Heart right ventricle (tissue), 16 donors: ENCODE measurements at regions of chr7 and their contacts with region 1.

Region 1: GRCh38 chr7:7566651-7567611 is at the start of gene MIOS:
- DNase-seq: peak; percentile 87 to 92
- ATAC-seq: peak; percentile 95 to 98 (median 97)
- H3K4me3 ChIP-seq: peak within 1 kb of the TSS; percentile 63 to 97 (median 82)
- H3K27ac ChIP-seq: peak within 1 kb of the TSS; percentile 48 to 97 (median 94)
- H3K4me1 ChIP-seq: peaks cover 8 to 52% (median 19%) of the 10 kb centered on the region in 9 donors
- H3K27me3 ChIP-seq: no peaks in the 10 kb centered on the region
- CTCF ChIP-seq: peak in 1 of 9 donors; percentile 15
- total RNA-seq, gene MIOS: 15.7 to 28.8 (median 20.8) TPM

Region 2: DNA sequence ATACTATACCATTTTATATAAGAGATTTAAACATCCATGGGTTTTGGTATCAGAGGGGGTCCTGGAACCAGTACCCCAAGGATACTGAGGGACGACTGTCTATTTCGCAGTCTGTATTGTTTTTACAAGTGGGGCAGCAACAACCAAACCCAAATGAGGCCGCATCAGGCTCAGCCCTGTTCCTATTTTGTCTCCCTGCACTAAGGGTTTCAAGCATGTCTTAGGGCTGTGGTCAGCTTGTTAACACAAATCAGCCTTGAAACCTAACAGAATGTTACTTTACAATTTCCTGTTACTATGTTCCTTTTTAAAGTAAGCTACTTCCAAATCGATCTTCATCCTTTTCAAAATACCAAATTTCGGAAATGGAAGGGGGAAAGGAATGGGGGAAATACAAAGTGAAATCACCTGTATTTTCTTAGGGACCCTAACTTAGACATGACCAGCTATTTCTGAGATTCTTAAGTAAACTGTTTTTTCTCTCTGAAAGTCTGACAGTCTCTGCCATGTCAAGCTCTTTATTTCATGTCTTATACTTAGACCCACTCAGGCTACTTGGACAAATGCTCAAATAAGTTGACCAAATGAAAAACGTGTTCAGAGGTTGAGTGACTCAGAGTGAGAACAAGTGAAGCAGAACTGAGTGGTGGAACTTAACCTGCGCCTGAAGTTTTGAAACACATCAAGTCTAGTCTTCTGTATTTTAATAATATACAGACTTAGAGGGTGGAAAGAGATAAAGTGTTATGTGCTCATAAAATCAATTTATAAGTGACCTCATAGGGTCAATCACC is 308.8 kb before region 1 on chr7:
- intact Hi-C with region 1: loop called in 1 of 10 experiments (anchors 10 kb)
- DNase-seq: no peak
- ATAC-seq: peak in 1 of 8 donors; percentile 50
- H3K4me3 ChIP-seq: peak overlapping the region in 1 of 10 donors; percentile 36
- H3K27ac ChIP-seq: peak overlapping the region in 2 of 10 donors; percentile 18 to 84
- H3K4me1 ChIP-seq: peaks cover 0 to 37% (median 8%) of the 10 kb centered on the region in 9 donors
- H3K27me3 ChIP-seq: no peaks in the 10 kb centered on the region
- CTCF ChIP-seq: no peak

Region 3: DNA sequence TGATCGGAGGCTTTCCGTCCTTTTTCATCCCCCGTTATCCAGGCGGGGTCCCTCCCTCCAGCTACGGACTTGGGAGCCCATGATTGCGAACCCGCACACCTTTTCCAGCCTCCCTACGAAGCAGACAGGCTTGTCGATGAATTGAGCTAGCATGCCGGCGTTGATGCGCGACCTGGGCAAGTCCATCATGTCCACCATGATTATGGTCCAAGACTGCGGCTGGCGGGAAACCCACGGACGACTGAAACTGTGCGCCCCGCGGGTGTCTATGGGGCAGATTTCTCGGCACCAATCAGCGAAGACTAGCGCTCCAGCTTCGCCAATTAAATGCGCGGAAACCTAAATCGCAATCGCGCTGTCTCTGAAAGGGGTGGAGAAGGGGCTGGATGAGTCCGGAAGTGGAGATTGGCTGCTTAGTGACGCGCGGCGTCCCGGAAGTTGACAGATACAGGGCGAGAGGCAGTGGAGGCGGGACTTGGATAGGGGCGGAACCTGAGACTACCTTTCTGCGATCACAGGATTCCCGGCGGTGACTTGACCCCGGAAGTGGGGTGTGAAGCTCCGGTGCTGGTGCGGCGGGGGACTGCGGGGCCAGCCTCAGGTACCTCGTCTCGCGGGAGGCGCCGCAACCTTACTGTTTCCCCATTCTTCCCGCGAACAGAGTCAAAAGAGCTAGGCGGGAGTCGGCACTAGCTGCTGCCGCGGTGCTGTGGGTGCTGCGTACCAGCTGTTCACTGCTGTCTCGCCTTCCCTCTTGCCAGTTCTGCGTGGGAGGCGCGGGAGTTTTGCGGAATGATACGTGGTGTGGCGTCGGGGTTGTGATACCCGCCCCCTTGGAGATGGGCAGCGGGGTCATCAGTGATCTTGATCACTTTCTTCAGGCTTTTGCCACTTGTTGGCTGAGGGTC is 73.5 kb after region 1 on chr7 and contains the start of gene UMAD1:
- intact Hi-C with region 1: loop called in 2 of 10 experiments (anchors 2 to 5 kb)
- DNase-seq: peak; percentile 96 to 99
- ATAC-seq: peak; percentile 99 to 100 (median 100)
- H3K4me3 ChIP-seq: peak within 1 kb of the TSS; percentile 69 to 94 (median 78)
- H3K27ac ChIP-seq: peak within 1 kb of the TSS; percentile 55 to 94 (median 86)
- H3K4me1 ChIP-seq: peaks cover 2 to 28% (median 18%) of the 10 kb centered on the region in 9 donors
- H3K27me3 ChIP-seq: no peaks in the 10 kb centered on the region
- CTCF ChIP-seq: no peak
- total RNA-seq, gene UMAD1: 13.4 to 24.7 (median 18.0) TPM